ENCODE measurements at regions of chr10 and their contacts with region 1.

Region 1: DNA sequence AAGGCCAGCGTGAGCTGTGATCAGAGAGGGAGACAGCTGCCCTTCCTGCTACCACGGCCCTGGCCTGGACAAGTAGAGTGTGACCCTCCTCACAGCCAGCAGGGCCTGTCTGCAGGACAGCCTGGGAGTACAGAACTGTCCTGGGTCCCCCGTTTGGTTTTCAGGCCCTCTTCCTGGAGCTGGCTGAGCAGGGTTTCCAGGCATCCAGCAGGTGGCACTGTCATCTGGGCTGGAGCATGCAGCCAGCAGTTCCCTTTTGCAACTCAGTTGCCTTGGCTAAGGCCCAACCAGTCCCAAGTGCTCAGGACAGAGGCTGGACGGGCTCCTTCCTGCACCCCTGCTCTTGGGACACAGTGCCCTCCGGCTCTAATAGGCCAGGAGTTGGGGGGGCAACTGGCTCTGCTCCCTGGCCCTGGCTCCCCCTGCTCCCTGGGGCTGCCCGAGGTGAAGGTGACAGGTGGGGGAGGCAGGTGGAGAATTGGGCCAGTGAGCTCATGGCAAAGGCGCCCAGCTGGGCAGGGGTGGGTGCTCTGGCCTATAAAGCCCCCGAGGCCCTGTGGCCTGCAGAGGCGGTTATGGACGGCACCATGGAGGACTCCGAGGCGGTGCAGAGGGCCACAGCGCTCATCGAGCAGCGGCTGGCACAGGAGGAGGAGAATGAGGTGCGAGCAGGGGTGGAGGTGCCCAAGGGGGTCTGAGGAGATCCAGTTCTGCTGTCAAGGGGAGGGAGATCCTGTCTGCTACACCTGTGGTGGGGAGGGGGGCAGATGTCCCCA is at the start of gene ANKRD2:
- DNase-seq: peak; percentile 52 to 62
- H3K4me3 ChIP-seq: peak within 1 kb of the TSS; percentile 14; the same call in 1 of the 2 replicates
- H3K27ac ChIP-seq: peak within 1 kb of the TSS; percentile 93
- H3K4me1 ChIP-seq: peaks cover 60% of the 10 kb centered on the region
- H3K27me3 ChIP-seq: no peaks in the 10 kb centered on the region
- CTCF ChIP-seq: peak; percentile 77
- total RNA-seq, gene ANKRD2: 5.5 and 8.4 TPM in 2 replicates

Region 2: DNA sequence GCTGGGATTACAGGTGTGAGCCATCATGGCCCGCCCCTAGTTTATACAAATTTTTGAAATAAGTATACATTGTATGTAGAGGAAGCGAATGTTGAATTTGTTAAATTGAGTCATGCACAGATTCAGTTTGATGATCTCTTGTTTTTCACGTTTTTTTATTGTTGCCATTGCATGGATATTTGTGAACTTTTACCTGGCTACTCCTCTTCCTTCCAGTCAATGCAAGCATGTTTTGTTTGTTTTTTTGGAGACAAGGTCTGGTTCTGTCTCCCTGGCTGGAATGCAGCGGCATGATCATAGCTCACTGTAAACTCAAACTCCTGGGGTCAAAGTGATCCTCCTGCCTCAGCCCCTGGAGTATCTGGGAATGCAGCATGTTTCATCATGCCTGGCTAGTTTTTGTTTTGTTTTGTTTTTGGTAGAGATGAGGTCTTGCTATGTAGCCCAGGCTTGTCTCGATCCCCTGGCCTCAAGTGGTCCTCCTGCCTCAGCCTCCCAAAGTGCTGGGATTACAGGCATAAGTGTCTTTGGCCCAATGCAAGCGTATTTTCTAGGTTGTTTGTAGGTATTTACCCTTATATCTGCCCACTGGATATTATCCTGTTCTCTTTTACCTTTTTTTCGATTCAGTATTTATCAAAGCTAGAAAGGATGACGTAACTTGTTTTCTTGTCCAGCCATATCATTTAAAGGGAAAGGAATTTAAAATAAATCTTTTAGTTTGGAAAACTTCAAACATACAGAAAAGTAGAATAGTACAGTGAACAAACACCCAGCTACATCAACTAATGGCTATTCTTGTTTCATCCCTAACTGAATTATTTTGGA is 729.3 kb before region 1 on chr10:
- CTCF ChIA-PET with region 1: no interaction called
- POLR2A ChIA-PET with region 1: interaction called, 17 read pairs
- intact Hi-C with region 1: no loop called
- DNase-seq: peak; percentile 28 to 52
- H3K4me3 ChIP-seq: no peak overlapping the region
- H3K27ac ChIP-seq: peak overlapping the region; percentile 65
- H3K4me1 ChIP-seq: peaks cover 60% of the 10 kb centered on the region
- H3K27me3 ChIP-seq: no peaks in the 10 kb centered on the region
- CTCF ChIP-seq: no peak

Region 3: DNA sequence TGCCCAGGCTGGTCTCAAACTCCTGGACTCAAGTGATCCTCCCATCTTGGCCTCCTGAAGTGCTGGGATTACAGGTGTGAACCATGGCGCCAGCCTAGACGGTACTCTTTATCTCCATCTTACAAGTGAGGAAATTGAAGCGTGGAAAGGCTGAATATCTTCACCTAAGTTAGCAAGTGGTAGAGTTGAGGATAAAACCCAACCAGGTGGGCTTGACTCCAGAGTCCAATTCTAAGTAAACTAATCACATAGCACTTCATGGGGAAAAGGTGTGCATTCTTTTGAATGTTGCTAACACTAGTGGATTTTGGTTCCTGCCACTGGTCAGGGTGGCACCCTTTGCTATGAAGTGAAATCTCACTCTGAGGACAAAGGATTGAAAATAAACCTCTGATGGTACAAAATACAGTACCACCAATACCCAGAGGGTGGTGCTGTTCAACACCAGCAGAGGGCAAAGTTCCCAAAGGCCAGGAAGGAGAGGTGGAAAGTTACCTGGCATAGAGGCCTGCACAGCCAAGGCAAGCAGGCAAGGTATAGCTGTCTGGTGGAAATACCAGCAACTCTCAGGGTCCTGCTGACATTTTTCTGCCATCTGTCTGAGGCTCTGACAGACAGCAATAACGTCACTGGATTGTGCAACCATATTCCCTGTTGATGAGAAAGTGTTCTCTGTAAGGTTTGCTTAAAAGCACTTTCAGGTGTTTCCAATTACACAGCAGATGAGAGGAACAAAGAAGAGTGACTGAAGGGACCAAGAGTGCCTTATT is 108.9 kb before region 1 on chr10:
- CTCF ChIA-PET with region 1: interaction called, 5 read pairs
- POLR2A ChIA-PET with region 1: no interaction called
- intact Hi-C with region 1: loop called (anchors 5 kb)
- DNase-seq: peak; percentile 54 to 71
- H3K4me3 ChIP-seq: no peak overlapping the region
- H3K27ac ChIP-seq: 0 out of 2 replicates have a peak overlapping the region, but pooled peaks have one; percentile 19
- H3K4me1 ChIP-seq: peaks cover 7% of the 10 kb centered on the region; the same call in 1 of the 2 replicates
- H3K27me3 ChIP-seq: no peaks in the 10 kb centered on the region
- CTCF ChIP-seq: peak; percentile 87

Region 4: DNA sequence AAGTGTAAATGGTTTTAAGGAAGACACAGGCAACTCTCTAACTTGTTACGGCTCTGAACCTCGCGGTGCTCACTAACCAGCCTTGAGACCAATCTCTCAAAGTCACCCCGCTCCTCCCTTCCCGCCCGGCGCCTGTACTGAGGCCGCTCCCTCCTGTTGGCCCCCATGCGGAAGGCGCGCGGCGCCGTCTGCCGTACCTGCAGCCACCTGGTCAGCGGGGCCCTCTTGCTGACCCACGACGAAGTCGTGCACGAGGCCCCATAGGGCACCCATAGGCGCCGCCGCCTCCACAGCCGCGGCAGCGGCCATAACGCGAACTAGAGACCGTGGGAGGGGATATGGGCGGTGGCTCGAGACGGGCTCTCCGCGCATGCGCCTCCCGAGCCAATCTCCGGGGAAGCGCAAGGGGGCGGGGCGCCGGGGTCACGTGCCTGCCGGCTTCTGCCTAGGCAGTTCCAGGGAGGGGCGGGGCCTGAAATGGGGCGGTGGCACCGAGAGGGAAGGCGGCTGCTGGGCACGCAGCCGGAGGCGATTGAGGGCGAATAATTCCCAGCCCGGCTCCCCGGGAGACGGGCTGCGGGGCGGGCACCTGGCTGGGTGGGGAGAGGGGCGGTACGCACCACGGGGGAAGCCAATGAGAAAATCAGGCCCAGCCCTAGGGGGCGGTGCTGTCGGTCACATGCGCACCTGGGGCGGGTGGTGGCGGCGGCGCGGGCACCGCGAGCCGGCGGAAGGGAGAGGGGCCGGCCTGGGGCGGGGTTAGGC is 74.1 kb before region 1 on chr10 and contains the start of gene MMS19:
- CTCF ChIA-PET with region 1: no interaction called
- POLR2A ChIA-PET with region 1: interaction called, 6 read pairs
- intact Hi-C with region 1: loop called (anchors 1 kb)
- DNase-seq: peak; percentile 88 to 98
- H3K4me3 ChIP-seq: peak within 1 kb of the TSS; percentile 82
- H3K27ac ChIP-seq: peak within 1 kb of the TSS; percentile 77
- H3K4me1 ChIP-seq: peaks cover 18% of the 10 kb centered on the region
- H3K27me3 ChIP-seq: no peaks in the 10 kb centered on the region
- CTCF ChIP-seq: no peak
- total RNA-seq, gene MMS19: 42.4 and 42.7 TPM in 2 replicates

Region 5: DNA sequence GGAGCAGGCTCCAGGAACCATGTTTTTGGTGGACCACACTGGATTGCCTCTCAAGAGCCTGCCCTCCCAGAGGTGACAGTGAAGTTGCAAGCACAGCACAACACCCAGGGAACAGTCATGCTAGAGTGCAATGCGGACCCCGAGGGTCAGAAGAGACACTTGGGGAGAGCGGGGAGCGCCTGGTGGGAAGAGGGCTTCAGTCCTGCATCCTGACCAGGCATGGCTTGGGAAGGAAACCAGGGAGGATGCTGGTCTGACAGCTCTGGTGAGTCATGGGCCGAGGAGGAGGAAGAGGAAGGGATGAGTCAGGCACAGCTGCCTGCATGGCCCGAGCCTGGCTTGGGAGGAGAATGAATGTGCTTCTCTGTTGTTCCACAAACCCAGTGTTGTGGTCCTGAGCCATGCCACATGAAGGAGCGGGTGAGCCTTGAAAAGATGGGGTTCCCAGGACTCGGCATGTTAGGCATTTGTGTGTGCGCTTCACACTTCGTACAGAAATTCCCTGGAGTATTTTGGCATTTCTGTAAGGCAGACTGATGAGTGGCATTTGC is 29.3 kb before region 1 on chr10:
- CTCF ChIA-PET with region 1: no interaction called
- POLR2A ChIA-PET with region 1: no interaction called
- intact Hi-C with region 1: loop called (anchors 1 kb)
- DNase-seq: peak; percentile 74 to 83
- H3K4me3 ChIP-seq: peak overlapping the region; percentile 10; the same call in 1 of the 2 replicates
- H3K27ac ChIP-seq: peak overlapping the region; percentile 80
- H3K4me1 ChIP-seq: peaks cover 50% of the 10 kb centered on the region
- H3K27me3 ChIP-seq: no peaks in the 10 kb centered on the region
- CTCF ChIP-seq: no peak

Region 6: GRCh38 chr10:97612386-97612785 is 40.0 kb after region 1 on chr10:
- CTCF ChIA-PET with region 1: interaction called, 5 read pairs
- POLR2A ChIA-PET with region 1: no interaction called
- intact Hi-C with region 1: loop called (anchors 1 kb)
- DNase-seq: peak; percentile 10 to 51
- H3K4me3 ChIP-seq: no peak overlapping the region
- H3K27ac ChIP-seq: no peak overlapping the region
- H3K4me1 ChIP-seq: no peaks in the 10 kb centered on the region
- H3K27me3 ChIP-seq: no peaks in the 10 kb centered on the region
- CTCF ChIP-seq: peak; percentile 67

Region 7: DNA sequence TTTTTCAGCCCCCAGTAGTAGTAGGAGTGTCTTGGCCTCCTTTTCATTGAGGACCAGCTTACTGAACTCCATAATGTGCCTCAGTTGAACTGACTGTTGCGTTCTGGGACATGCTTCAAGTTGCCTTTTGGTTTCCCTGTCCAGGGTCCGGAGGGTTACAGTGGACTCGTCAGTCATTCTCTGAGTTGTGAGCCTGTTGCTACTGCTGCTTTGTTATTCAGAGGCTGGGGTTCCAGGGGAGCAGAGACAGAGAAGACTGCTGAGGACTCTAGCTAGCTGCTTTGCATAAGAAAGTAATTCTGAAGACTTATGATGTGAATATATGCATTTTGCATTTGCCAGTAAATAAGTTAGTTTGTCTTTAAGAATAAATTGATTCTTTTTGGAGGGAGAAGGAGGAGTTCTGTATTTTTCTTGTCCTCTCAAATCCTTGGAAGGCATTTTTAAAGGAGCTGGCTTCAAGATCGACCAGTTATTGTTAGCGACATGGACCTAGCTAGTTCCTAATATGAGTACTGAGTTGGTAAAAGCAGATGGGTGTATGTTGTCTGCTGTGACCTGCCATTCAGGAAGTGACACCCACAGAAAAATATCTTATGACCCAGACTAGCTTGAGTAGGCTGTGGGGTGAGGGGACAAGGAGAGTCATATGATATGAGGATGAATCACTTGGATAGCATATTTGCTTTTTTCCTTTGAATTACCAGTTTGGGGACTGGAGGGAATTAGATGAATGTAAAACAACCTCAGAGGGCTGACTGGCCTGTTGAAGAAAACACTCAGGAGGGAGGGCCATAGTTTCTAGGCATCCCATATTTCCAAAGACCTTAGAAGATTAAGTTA is 76.4 kb after region 1 on chr10:
- CTCF ChIA-PET with region 1: no interaction called
- POLR2A ChIA-PET with region 1: no interaction called
- intact Hi-C with region 1: loop called (anchors 2 kb)
- DNase-seq: peak; percentile 49 to 93
- H3K4me3 ChIP-seq: peak overlapping the region; percentile 29; the same call in 1 of the 2 replicates
- H3K27ac ChIP-seq: peak overlapping the region; percentile 91
- H3K4me1 ChIP-seq: peaks cover 63% of the 10 kb centered on the region
- H3K27me3 ChIP-seq: no peaks in the 10 kb centered on the region
- CTCF ChIP-seq: no peak

Measured in PC-9 (cell line).